GM13977 (cell line): ENCODE measurements at regions of chr3 and their contacts with region 1.

Region 1: DNA sequence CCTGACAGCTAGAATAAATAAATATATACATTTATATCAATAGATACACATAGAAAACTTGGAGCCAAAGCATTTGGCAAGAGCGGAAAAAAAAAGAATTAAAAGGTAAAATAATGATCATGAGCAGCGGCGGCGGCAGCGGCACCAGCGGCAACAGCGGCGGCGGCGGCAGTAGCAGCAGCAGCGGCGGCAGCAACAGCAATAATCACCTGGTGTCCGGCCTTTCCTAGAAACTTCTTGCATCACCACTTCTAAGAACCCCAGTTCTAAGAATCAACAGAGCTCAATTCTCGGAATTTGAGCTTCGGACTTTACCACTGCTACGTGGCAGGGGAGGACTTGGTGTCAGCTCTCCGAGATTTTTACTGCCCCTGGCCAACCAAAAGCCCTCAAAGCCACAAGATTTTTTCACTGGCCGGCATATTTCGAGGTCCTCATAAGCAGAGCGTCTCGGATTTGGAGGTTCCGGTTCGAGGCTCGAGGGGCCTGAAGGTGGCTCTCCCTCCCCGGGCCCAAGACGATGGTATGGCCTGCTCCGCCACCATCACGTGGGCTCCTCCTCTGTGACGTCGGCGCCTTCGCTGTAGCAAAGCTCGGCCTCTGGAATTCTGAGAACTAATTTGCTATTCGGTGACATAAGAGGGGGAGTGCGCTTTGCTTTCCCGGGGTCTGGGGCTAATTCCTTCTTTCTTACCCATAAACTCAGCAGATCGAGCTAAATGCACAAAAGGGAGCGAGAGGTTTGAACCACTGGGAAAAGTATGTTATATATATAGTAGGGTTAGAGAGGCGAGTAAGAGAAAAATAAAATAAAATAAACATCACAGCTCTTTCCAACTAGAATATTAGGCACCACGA is at the start of gene BCL6:
- DNase-seq: peak; percentile 85
- CTCF ChIP-seq: no peak

Region 2: DNA sequence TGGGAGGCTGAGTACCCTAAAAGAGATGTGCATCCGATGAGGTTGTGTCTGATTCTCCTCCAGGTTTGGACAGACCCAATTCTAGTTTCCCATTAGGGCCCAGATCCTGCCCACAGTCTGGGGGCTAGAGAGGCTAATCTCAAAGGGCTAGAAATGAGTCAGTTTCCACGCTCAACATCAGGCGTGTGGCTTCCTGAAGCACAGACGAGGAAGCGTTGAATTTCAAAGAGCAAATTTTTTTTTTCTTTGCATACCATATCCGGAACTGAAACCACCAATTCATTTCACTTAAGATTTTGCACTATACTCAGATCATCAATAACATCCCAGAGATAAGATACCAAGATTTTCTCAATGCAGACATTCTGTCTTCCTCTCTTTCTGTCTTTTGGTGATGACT is 173.6 kb after region 1 on chr3:
- in situ Hi-C with region 1: loop called (anchors 25 kb)
- DNase-seq: no peak
- CTCF ChIP-seq: no peak

Region 3: GRCh38 chr3:187935623-187936156 is 190.3 kb after region 1 on chr3:
- in situ Hi-C with region 1: no loop called
- DNase-seq: peak; percentile 65
- CTCF ChIP-seq: no peak

Region 4: DNA sequence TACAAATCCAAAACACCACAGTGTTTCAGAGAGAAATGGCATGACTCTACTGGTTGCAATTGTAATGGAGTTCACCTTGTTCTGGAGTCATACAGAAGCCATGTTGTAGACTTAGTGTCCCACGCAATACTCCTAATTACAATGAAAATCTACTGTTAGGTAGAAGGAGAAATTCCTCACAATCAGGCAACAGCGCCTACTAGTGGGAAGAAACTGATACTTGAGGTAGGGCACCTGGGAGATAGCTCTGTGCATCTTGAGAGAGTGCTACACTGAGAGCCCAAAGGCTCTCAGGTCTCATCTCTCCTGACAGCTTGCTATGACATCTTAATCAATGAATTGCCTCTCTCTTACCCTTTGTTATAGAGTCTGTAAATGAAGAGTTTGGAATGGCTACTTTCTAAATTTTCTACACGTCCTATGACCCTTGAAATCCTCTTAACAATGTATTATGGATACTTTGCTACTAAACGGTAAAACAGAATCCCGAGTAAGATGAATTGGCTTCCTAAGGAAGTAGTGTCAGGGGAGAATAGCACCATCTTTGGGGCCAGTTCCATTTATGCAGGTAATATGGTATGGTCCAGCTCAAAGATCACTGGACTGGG is 1003.7 kb after region 1 on chr3:
- in situ Hi-C with region 1: loop called (anchors 25 kb)
- DNase-seq: peak; percentile 7
- CTCF ChIP-seq: peak; percentile 64

Region 5: GRCh38 chr3:189148081-189148507 is 1402.7 kb after region 1 on chr3:
- in situ Hi-C with region 1: loop called (anchors 25 kb)
- DNase-seq: peak; percentile 49
- CTCF ChIP-seq: peak; percentile 76